ENCODE measurements at regions of chr19 and their contacts with region 1.

Region 1: DNA sequence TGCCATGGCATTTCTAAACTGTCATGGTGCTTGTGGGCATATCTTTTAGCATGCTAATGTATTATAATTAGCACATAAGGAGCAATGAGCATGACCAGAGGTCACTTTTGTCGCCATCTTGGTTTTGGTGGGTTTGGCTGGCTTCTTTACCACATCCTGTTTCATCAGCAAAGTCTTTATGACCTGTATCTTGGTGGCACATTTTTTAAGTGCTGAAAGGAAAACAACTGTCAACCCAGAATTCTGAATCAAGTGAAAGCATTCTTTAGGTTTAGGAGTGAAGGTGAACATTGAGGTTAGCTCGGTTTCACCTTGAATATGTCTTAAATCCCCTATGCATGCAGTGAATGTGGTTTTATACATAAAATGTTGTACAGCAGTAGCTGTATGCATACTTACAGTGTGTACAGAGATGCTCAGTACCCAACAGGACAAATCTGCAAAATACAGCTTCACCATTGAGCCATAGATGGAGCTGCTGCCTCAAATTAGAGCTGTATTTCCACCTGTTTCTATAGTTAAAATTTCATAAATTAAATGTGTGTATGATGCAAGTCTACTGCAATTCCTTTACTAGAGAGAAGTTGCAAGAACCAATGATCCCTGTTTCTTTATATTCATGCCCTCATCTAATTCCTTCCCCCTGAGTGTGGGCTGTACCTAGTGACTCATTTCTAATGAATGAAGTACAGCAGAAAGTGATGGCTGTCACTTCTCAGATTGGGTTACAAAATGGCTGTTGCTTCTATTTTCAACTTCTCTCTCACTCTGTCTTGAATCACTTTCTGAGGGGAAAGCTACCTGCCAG is 25.2 kb upstream of the IGSF23 start:
- DNase-seq: peak; percentile 88
- H3K4me3 Mint-ChIP-seq: peak overlapping the region; percentile 21
- H3K27ac Mint-ChIP-seq: peak overlapping the region; percentile 99
- H3K4me1 Mint-ChIP-seq: peaks cover 25% of the 10 kb centered on the region
- H3K27me3 Mint-ChIP-seq: no peaks in the 10 kb centered on the region
- CTCF ChIP-seq: peak; percentile 52

Region 2: GRCh38 chr19:44371815-44372480 is 216.2 kb before region 1 on chr19:
- CTCF ChIA-PET with region 1: no interaction called
- POLR2A ChIA-PET with region 1: no interaction called
- intact Hi-C with region 1: no loop called
- DNase-seq: no peak
- H3K4me3 Mint-ChIP-seq: no peak overlapping the region
- H3K27ac Mint-ChIP-seq: no peak overlapping the region
- H3K4me1 Mint-ChIP-seq: no peaks in the 10 kb centered on the region
- H3K27me3 Mint-ChIP-seq: no peaks in the 10 kb centered on the region
- CTCF ChIP-seq: no peak

Region 3: GRCh38 chr19:44643605-44644401 is 55.6 kb after region 1 on chr19 and contains the start of gene PVR:
- CTCF ChIA-PET with region 1: interaction called, 7 read pairs
- POLR2A ChIA-PET with region 1: interaction called, 18 read pairs
- intact Hi-C with region 1: loop called (anchors 1 kb)
- DNase-seq: peak; percentile 82
- H3K4me3 Mint-ChIP-seq: peak within 1 kb of the TSS; percentile 84
- H3K27ac Mint-ChIP-seq: peak within 1 kb of the TSS; percentile 63
- H3K4me1 Mint-ChIP-seq: peaks cover 30% of the 10 kb centered on the region
- H3K27me3 Mint-ChIP-seq: no peaks in the 10 kb centered on the region
- CTCF ChIP-seq: no peak
- total RNA-seq, gene PVR: 140 and 141 TPM in 2 replicates

Measured in MCF 10A (cell line).